Heart left ventricle (tissue), 16 donors: ENCODE measurements at regions of chr16 and their contacts with region 1.

Region 1: GRCh38 chr16:8920645-8921346 is 38.6 kb downstream of the LITAFD start:
- DNase-seq: no peak
- ATAC-seq: no peak
- H3K4me3 ChIP-seq: no peak overlapping the region
- H3K27ac ChIP-seq: no peak overlapping the region
- H3K4me1 ChIP-seq: peaks cover 0 to 15% (median 10%) of the 10 kb centered on the region in 12 donors
- H3K27me3 ChIP-seq: no peaks in the 10 kb centered on the region
- CTCF ChIP-seq: no peak
- POLR2A ChIP-seq: no peak

Region 2: GRCh38 chr16:8898660-8899318 is 22.0 kb before region 1 on chr16:
- intact Hi-C with region 1: loop called in 1 of 10 experiments (anchors 1 kb)
- DNase-seq: no peak
- ATAC-seq: no peak
- H3K4me3 ChIP-seq: no peak overlapping the region
- H3K27ac ChIP-seq: no peak overlapping the region
- H3K4me1 ChIP-seq: peaks cover 0 to 4% (median 0%) of the 10 kb centered on the region in 12 donors
- H3K27me3 ChIP-seq: no peaks in the 10 kb centered on the region
- CTCF ChIP-seq: no peak
- POLR2A ChIP-seq: no peak